ENCODE measurements at regions of chr1 and their contacts with region 1.

Region 1: DNA sequence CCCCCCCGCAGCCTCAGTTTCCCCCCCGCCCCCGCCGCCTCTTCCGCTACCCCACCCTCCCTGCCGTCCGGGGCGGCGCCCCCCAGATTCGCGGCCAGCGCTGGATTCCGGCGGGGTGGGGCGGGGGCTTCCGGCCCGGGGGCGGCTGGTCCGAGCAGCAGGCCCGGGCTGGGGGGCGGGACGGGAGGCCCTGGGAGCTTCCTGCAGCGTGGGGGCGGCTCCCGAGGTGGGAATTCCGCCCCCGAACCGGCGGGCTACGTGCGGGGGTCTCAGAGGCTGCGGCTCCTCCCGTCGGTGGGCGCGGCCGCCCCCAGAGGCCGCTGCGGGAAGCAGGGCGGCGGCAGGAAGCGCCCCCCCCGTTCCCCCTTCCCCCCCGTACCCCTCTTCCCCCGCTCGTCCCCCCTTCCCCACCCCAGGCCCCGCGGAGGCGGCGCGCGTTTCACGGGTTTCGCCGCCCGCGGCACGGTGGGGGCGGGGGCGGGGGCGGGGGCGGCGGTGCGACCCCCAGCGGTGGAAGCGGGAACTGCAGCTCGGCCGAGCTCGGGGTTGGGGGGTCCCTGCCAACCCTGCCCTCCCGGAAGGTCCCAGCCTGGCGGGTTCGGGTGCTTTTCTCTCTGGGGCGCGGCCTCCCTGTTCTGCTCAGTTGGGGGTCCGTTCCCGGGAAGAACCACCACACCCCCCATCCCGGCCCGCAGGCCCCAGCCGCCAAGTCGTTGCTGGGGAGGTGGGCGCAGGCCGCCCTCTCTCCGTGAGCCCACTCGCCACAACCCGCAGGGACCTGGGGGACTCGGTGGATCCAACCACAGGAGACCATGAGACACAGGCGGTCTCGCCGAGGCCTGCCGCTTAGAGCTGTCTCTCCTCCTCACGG is 76.3 kb downstream of the MORN1 start:
- DNase-seq: peak; percentile 56
- ATAC-seq: peak; percentile 46
- H3K4me3 Mint-ChIP-seq: peak overlapping the region; percentile 15
- H3K27ac Mint-ChIP-seq: no peak overlapping the region
- H3K4me1 Mint-ChIP-seq: peaks cover 20% of the 10 kb centered on the region
- H3K27me3 Mint-ChIP-seq: no peaks in the 10 kb centered on the region
- CTCF ChIP-seq: peak; percentile 99

Region 2: GRCh38 chr1:2290595-2291510 is 24.2 kb before region 1 on chr1:
- CTCF ChIA-PET with region 1: interaction called, 10 read pairs
- POLR2A ChIA-PET with region 1: interaction called, 3 read pairs
- intact Hi-C with region 1: no loop called
- DNase-seq: peak; percentile 98
- ATAC-seq: peak; percentile 92
- H3K4me3 Mint-ChIP-seq: peak overlapping the region; percentile 76
- H3K27ac Mint-ChIP-seq: peak overlapping the region; percentile 95
- H3K4me1 Mint-ChIP-seq: peaks cover 78% of the 10 kb centered on the region
- H3K27me3 Mint-ChIP-seq: no peaks in the 10 kb centered on the region
- CTCF ChIP-seq: no peak

Region 3: GRCh38 chr1:2300851-2301606 is 14.0 kb before region 1 on chr1:
- CTCF ChIA-PET with region 1: interaction called, 9 read pairs
- POLR2A ChIA-PET with region 1: interaction called, 33 read pairs
- intact Hi-C with region 1: no loop called
- DNase-seq: peak; percentile 98
- ATAC-seq: peak; percentile 83
- H3K4me3 Mint-ChIP-seq: peak overlapping the region; percentile 81
- H3K27ac Mint-ChIP-seq: peak overlapping the region; percentile 99
- H3K4me1 Mint-ChIP-seq: peaks cover 55% of the 10 kb centered on the region
- H3K27me3 Mint-ChIP-seq: no peaks in the 10 kb centered on the region
- CTCF ChIP-seq: no peak

Region 4: GRCh38 chr1:2381741-2382620 is 66.9 kb after region 1 on chr1:
- CTCF ChIA-PET with region 1: interaction called, 10 read pairs
- POLR2A ChIA-PET with region 1: interaction called, 3 read pairs
- intact Hi-C with region 1: no loop called
- DNase-seq: peak; percentile 81
- ATAC-seq: peak; percentile 99
- H3K4me3 Mint-ChIP-seq: no peak overlapping the region
- H3K27ac Mint-ChIP-seq: no peak overlapping the region
- H3K4me1 Mint-ChIP-seq: no peaks in the 10 kb centered on the region
- H3K27me3 Mint-ChIP-seq: no peaks in the 10 kb centered on the region
- CTCF ChIP-seq: peak; percentile 94

Measured in activated CD8-positive, alpha-beta T cell treated with anti-CD3 and anti-CD28 coated beads for 36 hours (primary cell).